OCI-LY7 (cell line): ENCODE measurements at regions of chr5 and their contacts with region 1.

Region 1: DNA sequence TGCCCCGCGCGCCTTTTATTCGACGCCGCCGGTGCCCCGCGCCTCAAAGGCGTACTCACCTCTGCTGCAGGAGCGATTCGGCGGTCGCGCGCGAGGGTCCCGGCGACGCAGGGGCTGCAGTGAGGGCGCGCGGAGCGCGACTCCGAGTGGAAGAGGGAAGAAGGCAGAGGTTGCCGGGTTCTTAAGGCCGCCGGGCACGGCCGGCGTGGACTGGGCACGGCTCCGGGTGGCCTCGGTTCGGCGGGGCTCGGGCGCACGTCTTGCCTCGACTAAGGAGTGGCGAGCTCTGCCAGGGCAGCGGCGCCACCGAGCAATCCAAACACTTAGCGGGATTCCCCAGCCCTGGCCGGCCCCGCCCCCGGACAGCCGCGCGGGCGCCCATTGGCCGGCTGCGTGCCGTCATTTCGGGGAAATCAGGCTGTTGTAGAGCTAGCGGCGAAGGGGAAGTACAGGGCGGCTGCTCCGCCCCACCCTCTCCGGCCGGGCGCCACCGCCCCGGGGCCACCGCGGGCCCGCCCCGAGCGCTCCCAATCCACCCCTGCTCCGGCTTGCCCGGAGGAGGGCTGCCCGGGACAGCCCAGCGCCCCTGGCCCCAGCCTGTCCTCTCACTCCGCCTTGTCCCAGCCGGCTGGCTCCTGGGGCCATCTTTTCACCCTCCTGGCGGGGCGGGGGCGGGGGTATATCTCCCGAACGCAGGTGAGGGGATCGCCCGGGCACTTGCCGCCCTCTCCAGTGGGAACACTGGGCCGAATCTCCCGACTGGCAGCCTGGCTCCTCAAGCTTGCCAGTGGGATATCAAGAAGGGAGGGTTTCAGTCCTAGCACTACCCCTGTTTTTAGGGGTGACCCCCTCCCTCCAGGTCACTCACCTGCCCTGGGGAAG is at the start of gene IRF1:
- DNase-seq: peak; percentile 94
- H3K4me3 ChIP-seq: peak within 1 kb of the TSS; percentile 91
- H3K27ac ChIP-seq: peak within 1 kb of the TSS; percentile 76
- H3K4me1 ChIP-seq: peaks cover 59% of the 10 kb centered on the region
- CTCF ChIP-seq: 0 out of 2 replicates have a peak, but pooled peaks have one; percentile 23
- total RNA-seq, gene IRF1: 25.9 and 39.4 TPM in 2 replicates

Region 2: DNA sequence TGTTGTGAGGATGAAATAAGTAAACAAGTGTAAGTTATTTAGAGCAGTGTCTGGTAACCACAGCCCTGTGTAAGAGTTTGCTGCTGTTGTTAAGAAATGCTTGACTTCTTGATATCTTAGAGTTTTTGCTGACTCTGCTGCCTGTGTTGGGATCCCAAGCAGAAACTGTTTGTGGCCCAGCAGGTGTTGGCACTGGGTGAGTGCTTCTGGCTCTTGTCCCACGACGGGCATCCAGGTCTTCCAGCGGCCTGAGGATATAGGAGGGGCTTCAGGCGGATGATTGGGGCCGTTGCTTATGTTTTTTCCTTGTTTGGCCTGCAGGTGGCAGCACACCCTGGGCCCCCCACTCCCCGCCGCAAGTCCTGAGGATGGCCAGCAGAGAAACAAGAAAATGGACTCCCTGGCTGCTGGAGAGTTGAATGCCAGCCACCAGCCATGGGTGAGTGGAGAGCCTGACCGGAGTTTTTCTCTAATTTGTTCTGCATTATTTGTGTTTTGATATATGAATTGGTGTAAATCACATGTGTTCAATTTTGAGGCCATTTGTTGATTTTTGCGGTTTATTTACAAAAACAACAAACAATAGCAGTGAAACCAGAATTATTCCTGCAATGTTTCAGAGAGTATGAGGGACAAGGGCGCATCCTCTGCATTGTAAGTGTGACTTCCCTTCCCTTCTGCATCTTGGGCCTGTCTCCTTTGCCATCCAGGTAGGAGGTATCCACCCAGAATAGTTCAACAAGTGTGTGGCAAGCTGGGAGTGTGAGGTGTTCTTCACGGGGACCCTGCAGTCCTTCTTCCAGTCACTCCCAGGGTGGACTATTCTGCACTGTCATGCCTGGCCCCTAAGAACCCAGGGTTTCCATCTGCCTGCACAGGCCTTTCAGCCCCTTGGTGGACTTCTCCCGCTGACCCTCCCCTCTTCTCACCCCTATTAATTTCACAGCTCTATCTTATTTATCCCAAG is 70.9 kb before region 1 on chr5:
- CTCF ChIA-PET with region 1: interaction called, 6 read pairs
- POLR2A ChIA-PET with region 1: interaction called, 35 read pairs
- intact Hi-C with region 1: loop called (anchors 1 kb)
- DNase-seq: peak; percentile 82
- H3K4me3 ChIP-seq: peak overlapping the region; percentile 62
- H3K27ac ChIP-seq: peak overlapping the region; percentile 96
- H3K4me1 ChIP-seq: peaks cover 84% of the 10 kb centered on the region
- CTCF ChIP-seq: peak; percentile 95

Region 3: DNA sequence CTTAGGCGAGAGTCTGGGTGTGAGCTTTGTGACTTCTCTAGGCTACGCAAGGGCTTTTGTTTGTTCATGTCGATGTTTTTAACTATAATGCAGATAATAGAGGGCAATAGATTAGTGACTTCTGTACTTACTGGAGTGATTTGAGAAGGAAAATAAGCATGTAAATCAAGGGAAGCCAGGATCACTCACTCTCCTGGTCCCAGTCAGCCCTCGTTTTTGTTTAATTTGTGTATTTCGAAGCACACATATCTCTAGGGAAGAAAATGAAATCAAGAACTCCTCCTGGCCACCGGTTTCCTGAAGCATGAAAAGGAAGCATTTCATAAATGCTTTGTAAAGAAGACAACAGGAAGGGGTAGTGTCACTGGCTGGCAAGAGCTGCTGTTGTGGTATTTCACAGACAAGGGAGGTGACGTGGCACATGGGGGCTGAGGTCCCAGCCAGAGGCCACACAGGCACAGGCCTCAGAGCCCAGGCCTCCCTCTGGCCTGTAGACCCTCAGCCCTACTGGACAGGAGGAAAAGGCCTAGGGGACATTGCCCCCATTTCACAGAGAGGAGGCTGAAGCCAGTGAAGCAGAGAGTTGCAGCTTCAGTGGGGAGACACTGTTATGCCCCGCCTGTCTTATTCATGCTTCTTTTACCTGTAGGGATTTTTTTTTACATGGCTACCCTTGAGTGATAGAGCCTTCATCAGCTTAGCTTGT is 34.3 kb before region 1 on chr5:
- CTCF ChIA-PET with region 1: interaction called, 4 read pairs
- POLR2A ChIA-PET with region 1: interaction called, 13 read pairs
- intact Hi-C with region 1: loop called (anchors 2 kb)
- DNase-seq: peak; percentile 80
- H3K4me3 ChIP-seq: peak overlapping the region; percentile 47
- H3K27ac ChIP-seq: peak overlapping the region; percentile 82
- H3K4me1 ChIP-seq: peaks cover 70% of the 10 kb centered on the region
- CTCF ChIP-seq: no peak

Region 4: DNA sequence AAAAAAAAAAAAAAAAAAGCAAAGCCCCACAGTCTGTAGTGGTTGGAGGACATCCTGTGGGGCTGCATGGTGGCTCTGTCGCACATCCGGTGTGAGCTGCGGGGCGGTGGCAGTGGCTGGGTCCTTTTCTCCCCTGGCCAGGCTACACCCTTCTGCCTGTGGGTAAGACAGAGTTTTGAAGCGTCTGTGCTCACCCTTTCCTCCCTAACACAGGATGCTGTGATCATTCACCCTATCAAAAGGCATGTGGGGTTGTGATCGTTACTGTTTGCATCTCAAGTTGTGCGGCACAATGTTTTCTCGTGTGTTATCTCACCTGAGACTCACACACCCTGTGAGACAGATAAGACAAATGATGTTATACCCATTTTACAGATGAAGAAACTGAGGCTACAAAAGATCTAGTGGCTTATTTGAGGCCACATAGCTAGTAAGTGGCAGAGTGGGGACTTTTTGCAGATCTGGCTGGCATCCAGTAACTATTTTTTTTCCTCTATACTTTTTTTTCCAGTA is 17.7 kb before region 1 on chr5:
- CTCF ChIA-PET with region 1: interaction called, 6 read pairs
- POLR2A ChIA-PET with region 1: interaction called, 26 read pairs
- intact Hi-C with region 1: no loop called
- DNase-seq: peak; percentile 78
- H3K4me3 ChIP-seq: no peak overlapping the region
- H3K27ac ChIP-seq: peak overlapping the region; percentile 37
- H3K4me1 ChIP-seq: peaks cover 49% of the 10 kb centered on the region
- CTCF ChIP-seq: no peak

Region 5: DNA sequence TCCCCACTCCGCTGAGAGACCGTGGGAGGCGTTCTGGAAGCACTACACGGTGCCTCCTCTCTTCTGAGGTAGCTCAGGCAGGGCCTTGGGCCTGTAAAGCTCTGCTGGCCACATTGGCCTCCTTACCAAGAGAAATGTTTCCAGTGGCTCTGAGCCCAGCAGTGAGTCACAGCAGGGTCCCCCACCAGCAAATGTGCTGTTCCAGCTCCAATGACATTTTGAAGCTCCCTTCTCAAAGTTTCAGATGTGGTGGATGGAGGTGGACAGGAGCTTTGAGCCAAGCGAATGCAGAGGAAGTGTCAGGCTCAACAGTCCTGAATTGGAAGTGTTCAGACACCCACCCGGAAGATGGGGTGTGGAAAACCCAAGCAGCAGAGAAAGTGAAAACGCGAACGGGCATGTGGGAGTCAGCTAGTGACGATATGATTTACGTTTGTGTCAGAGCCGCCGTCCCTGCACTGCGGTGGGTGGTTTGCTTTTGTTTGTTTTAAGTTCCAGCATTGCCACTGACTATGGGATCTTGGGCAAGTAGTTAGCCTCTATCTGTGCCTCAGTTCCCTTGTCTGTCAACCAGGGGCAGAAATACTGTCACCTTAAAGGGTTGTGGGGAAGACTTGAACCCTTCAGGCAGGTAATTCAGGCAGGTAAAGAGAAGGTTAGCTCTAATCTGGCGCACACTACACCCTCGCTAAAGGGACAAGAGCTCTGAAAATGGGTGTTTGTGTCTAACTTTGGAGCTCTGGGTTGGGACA is 1439.5 kb after region 1 on chr5:
- CTCF ChIA-PET with region 1: no interaction called
- POLR2A ChIA-PET with region 1: no interaction called
- intact Hi-C with region 1: loop called (anchors 10 kb)
- DNase-seq: no peak
- H3K4me3 ChIP-seq: no peak overlapping the region
- H3K27ac ChIP-seq: peak overlapping the region; percentile 59
- H3K4me1 ChIP-seq: peaks cover 98% of the 10 kb centered on the region
- CTCF ChIP-seq: no peak